Calu3 (cell line): ENCODE measurements at regions of chr16 and their contacts with region 1.

Region 1: DNA sequence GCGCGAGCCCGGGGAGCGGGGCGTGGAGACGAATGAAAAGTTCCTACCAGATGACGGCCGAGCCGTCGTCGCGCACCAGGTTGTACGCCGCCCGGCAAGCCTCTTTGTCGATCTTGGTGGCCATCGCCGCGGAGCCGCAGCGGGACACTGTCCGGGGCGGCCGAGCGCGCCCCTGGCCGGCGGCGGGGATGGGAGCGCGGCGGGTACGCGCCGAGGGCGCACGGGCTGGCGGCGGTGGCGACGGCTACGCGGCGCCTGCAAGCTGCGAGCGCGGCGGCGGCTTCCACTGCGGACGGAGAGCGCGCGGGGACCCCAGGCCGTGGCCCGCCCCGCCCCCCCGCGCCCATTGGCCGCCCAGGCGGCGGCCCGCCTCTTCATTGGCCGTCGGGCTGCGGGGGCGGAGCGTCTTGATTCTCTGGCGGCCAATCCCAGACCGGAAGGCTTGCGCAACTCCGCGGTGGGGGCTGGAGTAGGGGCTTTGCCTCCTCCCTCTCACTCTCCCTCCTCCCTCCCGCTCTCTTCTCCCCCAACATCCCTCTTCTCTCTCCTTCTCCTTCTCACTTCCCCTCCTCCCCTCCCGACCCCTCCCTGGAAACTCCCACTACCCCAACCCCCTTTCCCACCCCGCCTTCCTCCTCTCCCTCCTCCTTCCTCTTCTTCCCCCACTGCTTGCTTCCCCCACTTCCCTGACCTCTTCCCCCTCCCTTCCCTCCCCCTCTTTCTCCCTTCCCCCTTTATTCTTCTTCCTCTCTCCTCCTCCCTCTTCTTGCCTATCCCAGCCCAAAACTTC is at the start of gene COTL1:
- DNase-seq: peak; percentile 99
- H3K4me3 Mint-ChIP-seq: peak within 1 kb of the TSS; percentile 98
- H3K27ac Mint-ChIP-seq: peak within 1 kb of the TSS; percentile 98
- H3K4me1 Mint-ChIP-seq: peaks cover 59% of the 10 kb centered on the region
- H3K27me3 Mint-ChIP-seq: no peaks in the 10 kb centered on the region
- CTCF ChIP-seq: no peak
- total RNA-seq, gene COTL1: 312 and 343 TPM in 2 replicates

Region 2: DNA sequence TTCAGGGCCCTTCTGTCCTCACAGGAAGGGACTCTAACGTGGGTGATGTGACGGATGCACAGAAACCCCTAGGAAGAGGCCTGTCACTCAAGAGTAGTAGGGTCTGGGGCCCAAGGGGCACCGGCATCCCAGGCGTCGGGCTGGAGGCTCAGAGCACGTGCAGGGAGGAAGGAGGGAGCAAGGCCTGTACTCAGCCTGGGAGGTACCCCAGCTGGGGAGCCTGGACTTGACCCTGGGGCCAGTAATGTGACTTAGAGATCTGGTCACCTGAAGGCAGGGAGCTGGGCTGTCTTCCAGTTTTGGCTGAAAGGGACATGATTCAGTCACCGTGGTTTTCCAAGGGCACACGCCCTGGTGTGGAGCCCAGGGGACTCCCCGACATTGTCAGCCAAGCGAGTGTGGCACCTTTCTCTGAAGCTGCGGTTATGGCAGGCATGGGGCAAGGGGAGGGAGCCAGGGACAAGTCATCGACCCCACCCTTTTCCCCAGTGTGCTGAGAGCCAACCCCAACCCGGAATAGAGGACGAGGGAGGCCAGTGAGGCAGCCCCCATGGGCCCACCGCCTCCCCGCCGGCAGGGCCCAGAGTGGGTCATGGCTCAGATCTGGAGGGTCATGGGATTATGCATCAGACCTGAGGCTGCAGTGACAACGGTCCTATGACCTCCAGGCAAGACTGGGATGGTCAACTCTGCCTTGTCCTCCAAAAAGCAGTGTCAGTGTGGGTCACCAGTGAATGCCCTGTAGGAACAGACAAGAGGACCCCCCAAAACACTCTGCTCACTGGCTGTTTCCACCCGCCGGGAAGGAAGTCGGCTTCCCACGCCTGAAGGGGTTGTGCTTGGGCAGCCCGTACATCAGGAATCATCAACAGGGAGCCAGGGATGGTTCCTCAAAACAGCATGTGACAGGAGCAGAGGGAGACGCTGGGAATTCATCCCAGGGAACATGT is 155.4 kb before region 1 on chr16:
- CTCF ChIA-PET with region 1: no interaction called
- intact Hi-C with region 1: no loop called
- DNase-seq: no peak
- H3K4me3 Mint-ChIP-seq: no peak overlapping the region
- H3K27ac Mint-ChIP-seq: peak overlapping the region; percentile 18
- H3K4me1 Mint-ChIP-seq: no peaks in the 10 kb centered on the region
- H3K27me3 Mint-ChIP-seq: no peaks in the 10 kb centered on the region
- CTCF ChIP-seq: no peak

Region 3: DNA sequence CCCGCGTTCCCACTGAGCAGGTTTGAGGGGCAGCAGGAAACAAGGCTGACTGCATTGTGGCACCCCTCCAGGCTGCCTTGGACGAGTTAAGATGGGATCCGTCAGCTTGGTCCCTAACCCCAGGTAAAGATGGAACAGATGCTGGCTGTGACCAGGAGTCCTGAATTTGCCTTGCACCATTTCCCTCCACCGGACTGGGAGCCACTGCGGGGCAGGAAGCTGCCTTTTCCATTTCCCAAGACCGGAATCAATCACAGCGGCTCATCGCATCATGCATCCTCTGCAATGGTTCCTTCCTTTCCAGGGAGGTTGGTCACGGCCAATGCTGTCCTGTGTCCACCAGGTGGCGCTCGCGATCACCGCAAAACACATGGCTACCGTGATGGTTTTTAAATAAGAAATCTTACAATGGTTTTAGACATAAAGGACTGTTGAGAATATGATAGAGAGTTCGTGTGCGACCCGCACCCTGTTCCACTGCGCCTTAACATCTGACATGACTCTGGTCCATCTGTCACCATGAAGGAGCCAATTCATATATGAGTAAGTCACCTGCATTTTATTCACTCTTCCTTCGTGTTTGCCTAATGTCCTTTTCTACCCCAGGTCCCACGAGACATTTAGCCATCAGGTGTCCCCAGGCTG is 106.7 kb before region 1 on chr16:
- CTCF ChIA-PET with region 1: interaction called, 12 read pairs
- intact Hi-C with region 1: loop called (anchors 1 kb)
- DNase-seq: peak; percentile 85
- H3K4me3 Mint-ChIP-seq: no peak overlapping the region
- H3K27ac Mint-ChIP-seq: peak overlapping the region; percentile 25
- H3K4me1 Mint-ChIP-seq: peaks cover 40% of the 10 kb centered on the region
- H3K27me3 Mint-ChIP-seq: no peaks in the 10 kb centered on the region
- CTCF ChIP-seq: peak; percentile 84

Region 4: GRCh38 chr16:84562174-84562815 is 55.7 kb before region 1 on chr16:
- CTCF ChIA-PET with region 1: no interaction called
- intact Hi-C with region 1: no loop called
- DNase-seq: no peak
- H3K4me3 Mint-ChIP-seq: no peak overlapping the region
- H3K27ac Mint-ChIP-seq: no peak overlapping the region
- H3K4me1 Mint-ChIP-seq: peaks cover 32% of the 10 kb centered on the region
- H3K27me3 Mint-ChIP-seq: no peaks in the 10 kb centered on the region
- CTCF ChIP-seq: no peak

Region 5: DNA sequence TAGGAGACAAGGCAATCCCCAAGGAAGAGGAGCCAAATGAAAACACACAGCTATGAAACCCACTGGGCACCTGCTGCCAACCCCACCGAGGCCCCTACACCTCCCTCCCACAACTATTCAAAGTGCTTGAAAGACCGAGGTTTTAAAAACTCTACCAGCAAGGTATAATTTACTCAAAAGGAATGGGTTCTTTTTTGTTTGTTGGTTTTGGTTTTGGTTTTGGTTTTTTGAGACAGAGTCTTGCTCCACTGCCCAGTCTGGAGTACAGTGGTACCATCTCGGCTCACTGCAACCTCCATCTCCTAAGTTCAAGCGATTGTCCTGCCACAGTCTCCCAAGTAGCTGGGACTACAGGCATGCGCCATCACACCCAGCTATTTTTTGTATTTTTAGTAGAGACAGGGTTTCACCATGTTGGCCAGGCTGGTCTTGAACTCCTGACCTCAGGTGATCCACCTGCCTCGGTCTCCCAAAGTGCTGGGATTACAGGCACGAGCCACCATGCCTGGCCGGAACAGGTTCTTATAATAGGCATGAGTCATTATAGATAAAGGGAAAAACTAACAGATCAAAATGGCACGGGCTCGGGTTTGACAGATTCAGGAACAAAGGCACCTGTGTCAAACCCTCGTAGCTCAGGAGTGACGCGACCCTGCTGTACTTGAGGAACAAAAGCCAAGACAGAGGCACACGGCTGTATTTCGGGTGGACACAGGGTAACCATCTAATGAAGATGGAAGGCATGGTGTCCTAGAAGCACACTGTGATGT is 40.8 kb before region 1 on chr16:
- CTCF ChIA-PET with region 1: interaction called, 4 read pairs
- intact Hi-C with region 1: loop called (anchors 2 kb)
- DNase-seq: peak; percentile 83
- H3K4me3 Mint-ChIP-seq: peak overlapping the region; percentile 58
- H3K27ac Mint-ChIP-seq: peak overlapping the region; percentile 96
- H3K4me1 Mint-ChIP-seq: peaks cover 45% of the 10 kb centered on the region
- H3K27me3 Mint-ChIP-seq: no peaks in the 10 kb centered on the region
- CTCF ChIP-seq: no peak

Region 6: DNA sequence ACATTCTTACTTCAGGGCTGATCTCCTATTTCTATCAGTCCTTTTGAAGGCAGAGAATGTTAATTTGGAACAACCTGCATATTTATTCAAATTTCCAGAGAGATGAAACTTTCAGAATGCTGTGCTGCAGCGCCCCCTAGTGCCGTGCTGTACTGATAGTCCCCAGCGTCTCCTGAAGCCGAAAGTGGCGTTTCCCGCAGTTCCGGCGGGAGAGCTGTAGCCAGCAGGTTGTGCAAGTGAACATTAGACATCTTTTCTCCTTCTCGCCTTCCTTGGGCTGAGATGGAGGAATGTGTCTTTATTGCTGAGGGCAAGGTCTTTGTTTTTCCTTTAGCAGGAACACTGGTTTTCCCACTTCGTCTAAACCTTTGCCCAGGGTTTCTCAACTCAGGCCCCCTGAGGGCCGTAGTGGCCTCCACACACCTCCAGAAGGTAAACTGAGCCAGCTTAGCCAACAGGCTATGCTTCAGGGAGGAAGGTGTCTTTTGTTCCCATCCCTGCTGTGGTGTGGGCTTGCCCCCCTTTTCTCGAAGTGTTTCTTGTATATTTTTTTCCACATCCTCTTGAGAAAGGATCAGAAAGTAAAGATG is 108.2 kb after region 1 on chr16:
- CTCF ChIA-PET with region 1: interaction called, 20 read pairs
- intact Hi-C with region 1: loop called (anchors 2 kb)
- DNase-seq: peak; percentile 94
- H3K4me3 Mint-ChIP-seq: peak overlapping the region; percentile 35
- H3K27ac Mint-ChIP-seq: peak overlapping the region; percentile 26
- H3K4me1 Mint-ChIP-seq: peaks cover 77% of the 10 kb centered on the region
- H3K27me3 Mint-ChIP-seq: no peaks in the 10 kb centered on the region
- CTCF ChIP-seq: peak; percentile 96

Region 7: GRCh38 chr16:84970447-84971127 is 352.6 kb after region 1 on chr16:
- CTCF ChIA-PET with region 1: interaction called, 4 read pairs
- intact Hi-C with region 1: loop called (anchors 1 kb)
- DNase-seq: peak; percentile 88
- H3K4me3 Mint-ChIP-seq: no peak overlapping the region
- H3K27ac Mint-ChIP-seq: no peak overlapping the region
- H3K4me1 Mint-ChIP-seq: no peaks in the 10 kb centered on the region
- H3K27me3 Mint-ChIP-seq: peaks cover 9% of the 10 kb centered on the region
- CTCF ChIP-seq: peak; percentile 95